ENCODE measurements at regions of chr14 and their contacts with region 1.

Region 1: GRCh38 chr14:23588884-23589598 is 10.5 kb upstream of the JPH4 start:
- DNase-seq: peak; percentile 58 to 89 (median 75)
- ATAC-seq: peak; percentile 96 to 99 (median 99)
- H3K4me3 ChIP-seq: no peak overlapping the region
- H3K4me3 Mint-ChIP-seq: no peak overlapping the region
- H3K27ac ChIP-seq: no peak overlapping the region
- H3K27ac Mint-ChIP-seq: peak overlapping the region in 1 of 2 donors; percentile 8
- H3K4me1 ChIP-seq: peaks cover 0 to 9% of the 10 kb centered on the region in 2 experiments
- H3K4me1 Mint-ChIP-seq: peaks cover 6 to 10% (median 10%) of the 10 kb centered on the region in 3 donors
- H3K27me3 ChIP-seq: peaks cover 0 to 9% of the 10 kb centered on the region in 2 experiments
- H3K27me3 Mint-ChIP-seq: peaks cover 18 to 29% of the 10 kb centered on the region in 2 donors

Region 2: GRCh38 chr14:23631702-23632460 is 42.8 kb after region 1 on chr14:
- CTCF ChIA-PET with region 1: interaction called, 9 to 13 read pairs
- POLR2A ChIA-PET with region 1: no interaction called
- DNase-seq: peak; percentile 26 to 81 (median 59)
- ATAC-seq: peak; percentile 78 to 87 (median 84)
- H3K4me3 ChIP-seq: peak overlapping the region; percentile 15 to 41
- H3K4me3 Mint-ChIP-seq: peak overlapping the region; percentile 58 to 69 (median 63)
- H3K27ac ChIP-seq: no peak overlapping the region
- H3K27ac Mint-ChIP-seq: peak overlapping the region; percentile 1 to 44
- H3K4me1 ChIP-seq: peaks cover 0 to 9% of the 10 kb centered on the region in 2 experiments
- H3K4me1 Mint-ChIP-seq: peaks cover 7 to 11% (median 11%) of the 10 kb centered on the region in 3 donors
- H3K27me3 ChIP-seq: peaks cover 0 to 3% of the 10 kb centered on the region in 2 experiments
- H3K27me3 Mint-ChIP-seq: no peaks in the 10 kb centered on the region

Region 3: DNA sequence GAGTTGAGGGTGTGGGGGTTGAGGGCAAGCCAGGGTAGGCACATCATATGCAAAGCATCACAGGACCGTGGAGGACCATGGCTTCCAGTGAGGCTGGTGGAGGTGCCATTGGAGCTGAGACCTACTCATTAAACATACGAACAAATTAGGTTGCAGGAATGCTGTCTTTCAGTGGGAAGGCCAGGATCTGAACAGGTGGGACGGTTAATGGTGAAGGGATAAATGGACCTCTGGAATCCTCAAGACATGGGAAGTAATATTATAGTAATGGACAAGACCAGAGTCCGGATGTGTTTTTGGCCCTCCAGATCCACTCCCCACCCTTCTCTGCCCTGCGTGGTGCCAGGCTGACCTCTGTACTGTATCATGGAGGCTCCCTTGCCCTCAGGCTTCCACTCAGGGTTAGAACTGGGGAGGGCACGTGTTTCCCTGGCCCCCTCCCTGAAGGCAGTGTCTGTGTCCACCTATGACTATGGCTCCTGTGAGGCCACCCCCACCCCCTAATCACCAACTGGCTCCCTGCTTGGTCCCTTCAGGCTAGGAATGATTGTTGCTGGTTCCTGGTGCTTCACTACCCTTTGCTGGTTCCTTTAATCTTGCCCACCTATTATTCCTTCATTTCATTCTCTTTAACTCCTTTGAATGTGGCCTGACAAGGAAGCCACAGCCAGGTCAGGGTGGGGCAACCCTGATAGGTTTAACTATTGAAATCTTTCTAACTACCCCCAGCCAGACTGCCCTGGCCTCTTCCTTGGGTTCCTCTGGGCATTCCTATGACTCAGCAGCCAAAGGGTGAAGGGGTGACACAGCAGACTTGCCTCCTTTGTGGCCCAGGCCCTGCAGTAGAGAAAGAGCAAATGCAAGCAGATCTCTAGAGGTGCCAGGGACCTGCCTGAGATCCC is 57.9 kb after region 1 on chr14:
- CTCF ChIA-PET with region 1: no interaction called
- POLR2A ChIA-PET with region 1: no interaction called
- DNase-seq: no peak
- ATAC-seq: no peak
- H3K4me3 ChIP-seq: no peak overlapping the region
- H3K4me3 Mint-ChIP-seq: no peak overlapping the region
- H3K27ac ChIP-seq: no peak overlapping the region
- H3K27ac Mint-ChIP-seq: no peak overlapping the region
- H3K4me1 ChIP-seq: no peaks in the 10 kb centered on the region
- H3K4me1 Mint-ChIP-seq: no peaks in the 10 kb centered on the region
- H3K27me3 ChIP-seq: peaks cover 0 to 17% of the 10 kb centered on the region in 2 experiments
- H3K27me3 Mint-ChIP-seq: peaks cover 2 to 3% of the 10 kb centered on the region in 2 donors

Region 4: GRCh38 chr14:23929822-23930294 is 340.8 kb after region 1 on chr14:
- CTCF ChIA-PET with region 1: interaction called, 10 to 16 read pairs
- POLR2A ChIA-PET with region 1: no interaction called
- DNase-seq: peak; percentile 41 to 90 (median 75)
- ATAC-seq: peak; percentile 81 to 94 (median 88)
- H3K4me3 ChIP-seq: no peak overlapping the region
- H3K4me3 Mint-ChIP-seq: no peak overlapping the region
- H3K27ac ChIP-seq: no peak overlapping the region
- H3K27ac Mint-ChIP-seq: no peak overlapping the region
- H3K4me1 ChIP-seq: no peaks in the 10 kb centered on the region
- H3K4me1 Mint-ChIP-seq: peaks cover 0 to 2% (median 0%) of the 10 kb centered on the region in 3 donors
- H3K27me3 ChIP-seq: peaks cover 0 to 6% of the 10 kb centered on the region in 2 experiments
- H3K27me3 Mint-ChIP-seq: peaks cover 5 to 10% of the 10 kb centered on the region in 2 donors

Region 5: GRCh38 chr14:24127673-24128072 is 538.6 kb after region 1 on chr14:
- CTCF ChIA-PET with region 1: interaction called in 1 of 2 experiments, 12 read pairs
- POLR2A ChIA-PET with region 1: no interaction called
- DNase-seq: no peak
- ATAC-seq: no peak
- H3K4me3 ChIP-seq: no peak overlapping the region
- H3K4me3 Mint-ChIP-seq: no peak overlapping the region
- H3K27ac ChIP-seq: no peak overlapping the region
- H3K27ac Mint-ChIP-seq: no peak overlapping the region
- H3K4me1 ChIP-seq: peaks cover 3 to 12% of the 10 kb centered on the region in 2 experiments
- H3K4me1 Mint-ChIP-seq: peaks cover 11 to 19% (median 15%) of the 10 kb centered on the region in 3 donors
- H3K27me3 ChIP-seq: no peaks in the 10 kb centered on the region
- H3K27me3 Mint-ChIP-seq: no peaks in the 10 kb centered on the region